ENCODE measurements at regions of chr19 and their contacts with region 1.

Region 1: DNA sequence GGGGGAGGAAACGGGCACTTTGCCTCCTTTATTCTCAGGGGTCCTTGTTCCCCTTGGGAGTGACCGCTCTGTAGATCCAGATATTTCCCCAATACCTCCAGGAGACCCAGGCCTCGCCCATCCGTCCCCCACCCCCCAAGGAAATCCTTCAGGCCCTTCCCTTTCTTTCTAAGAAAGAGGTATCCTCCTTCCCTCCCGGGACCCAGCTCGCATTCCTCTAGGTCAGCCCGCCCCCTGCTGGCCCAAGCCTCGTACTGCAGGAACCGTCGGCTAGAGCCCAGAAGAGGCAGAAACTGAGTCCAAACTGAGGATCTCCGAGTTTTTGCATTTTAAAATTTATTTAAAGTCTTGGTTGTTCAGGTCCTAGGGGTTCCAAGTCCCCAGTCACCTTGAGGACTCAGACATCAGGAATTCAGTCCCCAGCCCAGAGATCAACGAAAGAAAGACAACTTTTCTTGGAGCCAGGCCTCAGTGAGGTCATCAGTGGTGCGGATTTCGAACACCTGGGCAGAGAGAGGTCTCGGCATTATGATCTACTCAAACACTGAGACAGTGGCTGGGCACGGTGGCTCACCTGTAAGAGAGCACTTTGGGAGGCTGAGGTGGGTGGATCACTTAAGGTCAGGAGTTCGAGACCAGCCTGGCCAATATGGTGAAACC is 7.5 kb upstream of the LRFN1 start:
- DNase-seq: peak; percentile 82 to 87 (median 84)
- ATAC-seq: peak; percentile 86 to 97 (median 92)
- H3K4me3 ChIP-seq: no peak overlapping the region
- H3K27ac ChIP-seq: no peak overlapping the region
- H3K4me1 ChIP-seq: peaks cover 0 to 3% (median 0%) of the 10 kb centered on the region in 4 donors
- H3K27me3 ChIP-seq: no peaks in the 10 kb centered on the region
- CTCF ChIP-seq: peak; percentile 92 to 94 (median 92)
- POLR2A ChIP-seq: no peak

Region 2: GRCh38 chr19:38975214-38975860 is 352.8 kb before region 1 on chr19 and contains the start of gene FBXO17:
- intact Hi-C with region 1: no loop called
- DNase-seq: peak; percentile 75 to 78 (median 77)
- ATAC-seq: peak; percentile 52 to 81 (median 68)
- H3K4me3 ChIP-seq: peak within 1 kb of the TSS; percentile 80 to 82 (median 80)
- H3K27ac ChIP-seq: peak within 1 kb of the TSS; percentile 82 to 86 (median 84)
- H3K4me1 ChIP-seq: peaks cover 0 to 36% (median 8%) of the 10 kb centered on the region in 4 donors
- H3K27me3 ChIP-seq: no peaks in the 10 kb centered on the region
- CTCF ChIP-seq: no peak
- POLR2A ChIP-seq: no peak
- total RNA-seq, gene FBXO17: 19.9 to 57.9 (median 36.7) TPM

Region 3: DNA sequence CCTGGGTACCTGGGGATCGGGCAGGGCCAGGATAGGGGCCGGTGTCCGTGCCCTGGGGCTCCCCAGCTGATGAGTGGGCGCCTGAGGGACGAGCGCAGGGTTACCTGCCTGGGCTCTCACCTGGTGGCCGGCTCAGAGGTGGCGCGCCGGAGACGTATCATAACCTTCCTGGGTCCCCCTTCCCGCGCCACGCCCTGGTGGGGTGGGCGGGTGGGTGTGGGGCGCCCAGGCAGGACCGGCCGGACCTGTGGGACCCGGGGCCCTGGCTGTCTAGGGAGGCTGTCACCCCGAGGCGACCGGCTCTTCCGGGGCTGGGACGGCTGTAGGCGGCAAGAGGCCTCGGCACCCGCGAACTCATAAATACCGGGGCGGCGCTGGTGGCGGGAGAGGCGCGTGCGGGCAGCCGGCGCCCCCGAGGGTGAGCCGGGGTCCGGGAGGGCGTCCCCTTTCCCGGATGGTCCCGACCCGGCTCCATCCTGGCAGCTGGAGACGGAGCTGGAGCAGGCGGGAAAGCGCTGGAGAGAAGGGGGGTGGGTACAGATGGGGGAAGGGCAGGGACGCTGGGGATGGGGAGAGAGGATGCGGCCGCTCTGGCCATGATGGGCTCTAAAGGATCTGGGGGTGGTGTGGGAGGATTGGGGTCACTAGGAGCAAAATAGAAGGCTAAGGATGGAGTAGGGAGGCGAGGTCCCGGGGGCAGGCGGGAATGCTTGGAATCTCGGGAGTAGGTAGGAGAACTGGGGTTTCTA is 244.0 kb before region 1 on chr19 and contains the start of gene ACP7:
- intact Hi-C with region 1: no loop called
- DNase-seq: no peak
- ATAC-seq: peak in 1 of 4 donors; percentile 41
- H3K4me3 ChIP-seq: no peak within 1 kb of the TSS
- H3K27ac ChIP-seq: no peak within 1 kb of the TSS
- H3K4me1 ChIP-seq: no peaks in the 10 kb centered on the region
- H3K27me3 ChIP-seq: no peaks in the 10 kb centered on the region
- CTCF ChIP-seq: no peak
- POLR2A ChIP-seq: no peak
- total RNA-seq, gene ACP7: not detected

Region 4: DNA sequence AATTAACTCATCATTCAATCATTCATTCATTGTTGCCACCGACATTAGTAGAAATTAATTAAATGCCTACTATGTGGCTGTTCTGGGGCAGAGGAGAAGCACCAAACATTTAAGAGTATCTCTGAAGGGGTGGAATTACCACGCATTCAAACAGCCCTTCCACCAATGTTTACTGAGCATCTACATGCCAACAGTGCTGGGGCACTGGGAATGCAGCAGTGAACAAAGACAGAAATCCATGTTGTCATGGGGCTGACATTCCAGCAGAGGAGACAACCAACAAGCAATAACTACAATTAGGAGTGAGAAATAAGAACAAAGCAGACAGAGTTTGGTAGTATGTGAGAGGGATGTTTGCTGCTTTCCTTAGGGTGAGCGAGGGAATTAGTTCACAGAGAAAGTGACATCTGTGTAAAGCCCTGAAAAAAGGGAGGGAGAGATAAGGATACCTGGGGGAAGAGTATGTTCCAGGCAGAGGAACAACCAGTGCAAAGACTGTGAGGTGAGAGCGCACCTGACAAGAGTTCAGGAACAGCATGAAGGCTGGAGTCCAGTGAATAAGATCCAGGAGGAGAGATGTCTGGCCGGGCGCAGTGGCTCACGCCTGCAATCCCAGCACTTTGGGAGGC is 203.9 kb before region 1 on chr19:
- intact Hi-C with region 1: loop called in 1 of 2 experiments (anchors 5 kb)
- DNase-seq: no peak
- ATAC-seq: no peak
- H3K4me3 ChIP-seq: no peak overlapping the region
- H3K27ac ChIP-seq: no peak overlapping the region
- H3K4me1 ChIP-seq: peaks cover 0 to 30% (median 15%) of the 10 kb centered on the region in 4 donors
- H3K27me3 ChIP-seq: no peaks in the 10 kb centered on the region
- CTCF ChIP-seq: no peak
- POLR2A ChIP-seq: no peak

Region 5: DNA sequence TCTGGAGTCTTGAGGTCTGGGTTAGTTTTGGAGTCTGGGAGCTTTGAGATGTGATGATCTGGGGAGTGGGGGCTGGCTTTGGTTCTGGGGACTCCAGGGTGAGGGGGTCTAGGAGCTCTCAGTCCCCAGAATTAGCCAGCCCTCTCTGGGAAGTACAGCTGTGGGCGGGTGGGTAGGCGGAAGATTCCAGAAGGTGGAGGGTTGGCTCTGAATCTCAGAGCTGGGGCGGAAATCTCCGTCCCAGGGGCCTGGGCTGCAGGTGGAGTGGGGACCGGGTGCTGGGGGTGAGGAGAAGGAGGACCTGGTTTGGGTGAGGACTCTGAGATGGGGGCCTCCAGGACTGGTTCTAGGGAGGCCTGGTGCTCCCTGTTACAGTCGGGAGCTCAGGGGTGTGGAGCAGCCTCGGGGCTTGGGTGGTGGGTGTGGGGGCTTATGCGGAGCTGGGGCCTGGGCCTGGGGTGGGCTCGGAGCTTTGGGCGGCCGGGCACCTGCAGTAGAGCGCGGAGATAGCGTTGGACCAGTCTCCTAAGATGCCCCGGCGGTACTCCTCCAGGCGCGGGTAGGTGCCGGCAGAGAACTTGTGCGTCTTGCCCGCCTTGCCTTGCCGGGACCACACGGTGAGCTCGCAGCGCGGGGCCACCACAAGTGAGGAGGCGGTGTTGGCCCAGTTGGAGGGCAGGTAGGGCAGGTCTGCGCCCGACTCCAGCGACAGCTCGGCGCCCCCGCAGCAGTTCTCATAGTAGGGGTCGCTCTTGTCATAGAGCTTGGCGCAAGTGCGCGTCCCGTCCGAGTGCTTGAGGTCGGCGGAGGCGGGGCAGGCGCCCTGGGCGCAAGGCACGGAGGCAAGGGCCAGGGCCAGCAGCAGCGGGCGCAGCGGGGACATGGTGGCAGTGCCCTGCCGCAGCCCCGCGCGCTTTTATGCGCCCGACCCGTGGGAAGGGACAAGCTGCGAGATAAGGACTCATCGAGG is 124.5 kb before region 1 on chr19 and contains the start of gene SYCN:
- intact Hi-C with region 1: loop called in 1 of 2 experiments (anchors 10 kb)
- DNase-seq: no peak
- ATAC-seq: no peak
- H3K4me3 ChIP-seq: no peak within 1 kb of the TSS
- H3K27ac ChIP-seq: no peak within 1 kb of the TSS
- H3K4me1 ChIP-seq: no peaks in the 10 kb centered on the region
- H3K27me3 ChIP-seq: peaks cover 0 to 5% of the 10 kb centered on the region in 2 donors
- CTCF ChIP-seq: no peak
- POLR2A ChIP-seq: no peak
- total RNA-seq, gene SYCN: not detected

Region 6: DNA sequence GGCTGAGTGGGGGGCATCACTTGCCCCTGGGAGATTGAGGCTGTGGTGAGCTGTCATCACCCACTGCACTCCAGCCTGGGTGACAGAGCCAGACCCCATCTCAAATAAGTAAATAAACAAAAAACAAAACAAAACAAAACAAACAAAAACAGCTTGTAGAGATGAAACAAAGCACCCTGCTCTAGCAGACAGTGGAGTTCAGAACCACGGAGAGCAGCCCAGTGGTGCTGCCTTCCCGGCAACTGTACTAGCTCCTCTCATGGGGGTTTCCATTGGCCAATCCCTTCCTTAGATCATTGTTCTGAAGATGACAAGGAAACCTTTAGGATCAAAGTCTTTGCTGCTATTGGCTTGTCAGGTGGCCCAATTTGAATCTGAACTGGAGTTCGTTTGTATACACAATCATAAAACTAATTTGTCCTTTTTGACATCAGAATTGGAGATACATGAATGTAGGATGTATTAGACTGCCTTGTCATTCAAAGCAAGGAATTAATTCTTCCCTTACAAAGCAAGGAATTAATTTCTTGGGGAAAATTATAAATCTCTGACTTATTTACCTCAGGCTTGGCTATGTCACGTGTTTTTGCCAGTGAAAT is 104.4 kb before region 1 on chr19:
- intact Hi-C with region 1: no loop called
- DNase-seq: no peak
- ATAC-seq: no peak
- H3K4me3 ChIP-seq: no peak overlapping the region
- H3K27ac ChIP-seq: no peak overlapping the region
- H3K4me1 ChIP-seq: no peaks in the 10 kb centered on the region
- H3K27me3 ChIP-seq: no peaks in the 10 kb centered on the region
- CTCF ChIP-seq: no peak
- POLR2A ChIP-seq: no peak

Measured in right lobe of liver (tissue), 6 donors.